ENCODE measurements at regions of chrX and their contacts with region 1.

Region 1: DNA sequence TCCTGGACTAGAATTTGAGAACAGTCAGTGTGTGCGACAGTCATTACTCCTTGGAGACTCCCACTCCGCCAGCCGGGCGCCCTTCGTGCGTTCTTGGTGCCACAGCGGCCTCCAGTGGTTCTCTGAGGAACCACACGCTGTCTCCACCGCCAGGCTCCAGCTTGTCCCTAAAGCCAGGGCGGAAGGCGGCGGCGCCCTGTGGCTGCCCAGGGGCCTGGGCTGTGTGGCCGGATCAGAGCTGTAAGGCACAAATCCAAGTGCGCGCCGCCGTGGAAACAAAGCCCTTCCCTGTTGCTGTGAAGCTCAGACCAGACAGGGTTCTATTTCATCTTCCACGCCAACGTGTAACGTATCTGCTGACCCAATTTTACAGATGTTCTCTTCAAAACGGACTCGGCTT is 34.2 kb downstream of the IDS start:
- DNase-seq: no peak
- H3K4me3 ChIP-seq: no peak overlapping the region
- H3K27ac ChIP-seq: no peak overlapping the region
- H3K27me3 ChIP-seq: no peaks in the 10 kb centered on the region
- CTCF ChIP-seq: peak; percentile 77

Region 2: DNA sequence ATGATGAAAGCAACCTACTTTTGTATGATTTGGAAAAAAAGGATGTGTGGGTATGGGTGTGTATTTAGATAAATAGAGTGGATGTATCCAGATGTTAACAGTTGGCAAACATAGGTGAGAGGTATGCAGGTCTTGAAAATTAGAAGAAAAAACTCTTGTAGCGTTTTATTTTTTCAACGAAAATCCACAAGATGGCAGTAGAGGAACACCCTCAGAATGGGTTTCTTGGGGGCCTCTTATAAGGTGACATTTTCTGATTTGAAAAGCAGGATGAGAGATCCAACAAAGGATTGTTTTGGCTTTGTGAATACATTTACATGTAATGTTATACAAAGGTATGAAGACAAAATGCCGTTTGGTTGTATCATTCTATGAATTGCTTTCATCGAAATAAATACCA is 1421.5 kb before region 1 on chrX:
- CTCF ChIA-PET with region 1: interaction called, 47 read pairs
- POLR2A ChIA-PET with region 1: no interaction called
- DNase-seq: no peak
- H3K4me3 ChIP-seq: no peak overlapping the region
- H3K27ac ChIP-seq: no peak overlapping the region
- H3K27me3 ChIP-seq: no peaks in the 10 kb centered on the region
- CTCF ChIP-seq: peak; percentile 47

Region 3: DNA sequence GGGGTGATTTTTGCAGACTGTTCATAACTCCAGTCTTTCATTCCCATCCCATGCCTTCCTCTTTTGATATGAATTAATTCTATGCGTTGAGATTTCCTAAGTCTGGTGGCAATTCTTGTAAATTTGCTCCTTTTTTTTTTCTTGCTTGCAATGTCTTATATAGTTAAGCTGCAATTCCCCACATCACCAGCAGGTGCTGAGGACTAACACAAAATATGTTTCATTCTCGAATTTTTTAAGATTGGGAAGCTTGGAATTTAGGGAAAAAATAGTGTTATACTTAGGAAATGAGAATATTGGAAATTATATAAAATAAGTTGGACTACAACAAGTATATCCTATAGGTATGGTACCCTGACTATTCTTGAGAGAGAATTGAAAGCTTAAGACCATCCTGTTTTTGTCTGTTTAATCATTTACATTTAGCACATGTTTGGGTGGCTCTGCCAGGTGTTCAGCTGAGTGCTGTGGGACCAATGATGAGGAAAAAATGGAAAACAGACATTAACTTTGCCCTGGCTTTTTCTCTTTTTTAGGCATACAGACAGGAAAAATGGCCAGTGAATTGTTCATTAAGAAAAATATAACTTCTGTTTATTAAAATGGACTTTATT is 940.4 kb before region 1 on chrX:
- CTCF ChIA-PET with region 1: interaction called, 15 read pairs
- POLR2A ChIA-PET with region 1: no interaction called
- DNase-seq: no peak
- H3K4me3 ChIP-seq: no peak overlapping the region
- H3K27ac ChIP-seq: no peak overlapping the region
- H3K27me3 ChIP-seq: no peaks in the 10 kb centered on the region
- CTCF ChIP-seq: peak; percentile 63

Region 4: DNA sequence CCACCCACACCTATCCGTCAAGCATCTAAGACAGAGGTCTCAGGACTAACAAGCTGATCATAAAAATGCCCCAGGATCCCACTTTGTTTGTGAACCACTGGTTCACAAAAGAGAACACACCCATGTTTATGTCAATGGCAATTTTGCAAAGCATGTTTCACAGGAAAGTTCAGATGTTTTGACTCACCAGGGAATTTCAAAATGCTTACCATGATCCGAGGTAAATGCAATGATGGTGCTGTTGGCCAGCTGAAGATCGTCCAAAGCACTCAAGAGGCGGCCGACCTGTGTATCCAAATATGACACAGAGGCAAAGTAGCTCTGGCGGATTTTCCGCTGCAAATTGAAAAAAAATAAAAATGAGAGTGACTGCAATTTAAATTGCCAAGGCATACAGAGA is 19.1 kb after region 1 on chrX:
- CTCF ChIA-PET with region 1: interaction called, 14 read pairs
- POLR2A ChIA-PET with region 1: no interaction called
- DNase-seq: no peak
- H3K4me3 ChIP-seq: no peak overlapping the region
- H3K27ac ChIP-seq: no peak overlapping the region
- H3K27me3 ChIP-seq: no peaks in the 10 kb centered on the region
- CTCF ChIP-seq: no peak